Activated naive CD4-positive, alpha-beta T cell treated with anti-CD3 and anti-CD28 coated beads, Interleukin-2, amount 10 ng/mL, durations not matched to agents 7 days and 5 days (primary cell): ENCODE measurements at regions of chr15 and their contacts with region 1.

Region 1: DNA sequence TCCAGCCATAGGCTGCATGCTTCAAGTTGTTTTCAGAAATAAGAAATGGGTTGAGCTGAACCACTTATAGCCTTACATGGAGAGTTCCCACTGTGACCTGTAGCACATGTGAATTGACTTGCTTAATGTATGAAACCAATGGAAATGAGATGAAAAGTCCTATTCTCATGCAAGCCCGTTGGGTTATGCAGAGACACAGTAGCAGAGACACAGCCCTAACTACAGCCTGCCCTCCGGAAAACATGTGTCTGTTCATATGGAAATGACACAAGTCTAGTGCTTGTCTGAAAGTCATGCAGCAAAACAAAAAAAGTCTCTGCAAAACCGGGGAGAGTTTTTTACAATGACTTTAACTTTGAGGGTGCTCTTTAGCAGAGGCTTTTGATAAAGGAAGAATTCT is 14.4 kb downstream of the HIGD2B start:
- DNase-seq: no peak
- H3K4me3 Mint-ChIP-seq: no peak overlapping the region
- H3K27ac Mint-ChIP-seq: no peak overlapping the region
- H3K4me1 Mint-ChIP-seq: peaks cover 6% of the 10 kb centered on the region
- H3K27me3 Mint-ChIP-seq: peaks cover 37% of the 10 kb centered on the region

Region 2: GRCh38 chr15:72339777-72340177 is 331.8 kb before region 1 on chr15:
- CTCF ChIA-PET with region 1: interaction called, 11 read pairs
- DNase-seq: no peak
- H3K4me3 Mint-ChIP-seq: no peak overlapping the region
- H3K27ac Mint-ChIP-seq: no peak overlapping the region
- H3K4me1 Mint-ChIP-seq: no peaks in the 10 kb centered on the region
- H3K27me3 Mint-ChIP-seq: no peaks in the 10 kb centered on the region

Region 3: DNA sequence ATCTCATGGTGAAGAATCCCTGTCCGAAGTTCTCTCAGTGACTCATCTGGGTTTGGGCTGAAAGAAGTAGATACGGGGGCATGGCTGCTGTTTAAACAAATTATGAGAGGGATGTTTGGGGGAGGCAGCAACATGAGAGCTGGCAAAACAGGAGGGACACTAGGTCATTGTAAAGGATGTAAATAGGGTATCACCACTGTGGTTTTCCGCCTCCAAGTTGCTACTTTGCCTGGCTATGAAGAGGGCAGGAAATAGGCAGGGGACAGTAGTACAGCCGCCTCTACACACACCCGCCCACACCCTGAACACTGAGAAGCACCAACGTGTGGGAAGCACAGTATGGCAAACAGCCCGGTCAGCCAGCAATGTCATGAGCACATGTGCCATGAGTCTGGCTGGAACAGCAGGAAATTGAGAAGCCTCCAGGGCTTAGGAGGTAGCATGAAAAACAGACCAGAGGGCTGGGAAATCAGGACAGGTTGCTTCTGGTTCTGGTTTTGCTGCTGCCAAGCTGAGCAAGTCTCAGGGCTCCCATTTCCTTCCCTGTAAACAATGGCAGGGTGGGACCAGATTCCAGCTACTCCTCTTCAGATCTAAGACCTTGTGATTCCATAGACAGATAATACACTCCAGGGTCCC is 312.8 kb before region 1 on chr15:
- CTCF ChIA-PET with region 1: no interaction called
- DNase-seq: no peak
- H3K4me3 Mint-ChIP-seq: no peak overlapping the region
- H3K27ac Mint-ChIP-seq: no peak overlapping the region
- H3K4me1 Mint-ChIP-seq: peaks cover 7% of the 10 kb centered on the region
- H3K27me3 Mint-ChIP-seq: no peaks in the 10 kb centered on the region

Region 4: DNA sequence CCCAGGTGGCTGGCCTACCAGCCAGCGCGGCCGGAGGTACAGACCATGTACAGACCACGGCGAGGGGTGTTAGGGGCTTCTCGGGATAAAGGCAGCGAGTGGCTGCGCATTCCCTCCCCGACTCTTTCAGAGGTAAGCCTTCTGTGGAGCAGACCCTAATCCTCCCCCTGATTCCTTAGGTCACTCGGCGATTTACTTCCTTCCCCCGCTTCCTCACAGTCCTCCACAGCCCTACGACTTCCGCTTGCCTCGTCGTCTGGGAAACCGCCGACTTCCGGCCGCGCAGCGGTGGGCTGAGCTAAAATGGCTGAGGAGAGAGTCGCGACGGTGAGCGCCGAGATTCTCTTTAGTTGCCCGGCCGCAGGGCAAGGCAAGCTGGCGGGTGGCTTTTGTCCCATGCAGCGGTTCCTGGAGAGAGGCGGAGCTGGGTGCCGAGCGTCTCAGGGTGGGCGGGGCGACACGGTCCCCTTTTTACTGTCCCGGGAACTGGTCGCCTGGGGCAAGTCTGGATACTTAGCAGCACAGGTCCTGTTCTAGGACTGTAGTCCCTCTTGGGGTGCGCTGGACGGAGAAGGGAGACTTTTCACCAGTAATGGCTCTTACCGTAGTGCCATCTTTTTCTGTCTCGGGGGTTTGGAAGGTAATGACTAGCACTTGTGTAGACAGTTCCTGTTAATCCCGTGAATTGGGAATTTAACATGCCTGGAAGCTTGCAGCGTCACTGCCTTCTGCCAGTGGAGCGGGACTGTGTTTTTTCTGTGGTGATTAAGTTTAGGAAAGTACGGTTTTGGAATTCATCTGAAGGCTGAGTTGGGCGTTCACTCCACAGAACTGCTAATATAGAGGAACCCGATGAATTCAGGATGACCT is 14.6 kb after region 1 on chr15 and contains the starts of genes BBS4 and HIGD2B:
- CTCF ChIA-PET with region 1: interaction called, 15 read pairs
- DNase-seq: peak; percentile 93
- H3K4me3 Mint-ChIP-seq: peak within 1 kb of the TSS; percentile 97
- H3K27ac Mint-ChIP-seq: peak within 1 kb of the TSS; percentile 88
- H3K4me1 Mint-ChIP-seq: peaks cover 22% of the 10 kb centered on the region
- H3K27me3 Mint-ChIP-seq: peaks cover 4% of the 10 kb centered on the region

Region 5: GRCh38 chr15:72732516-72732915 is 61.0 kb after region 1 on chr15:
- CTCF ChIA-PET with region 1: no interaction called
- DNase-seq: no peak
- H3K4me3 Mint-ChIP-seq: no peak overlapping the region
- H3K27ac Mint-ChIP-seq: no peak overlapping the region
- H3K4me1 Mint-ChIP-seq: peaks cover 10% of the 10 kb centered on the region
- H3K27me3 Mint-ChIP-seq: no peaks in the 10 kb centered on the region